ENCODE measurements at regions of chr12 and their contacts with region 1.

Region 1: DNA sequence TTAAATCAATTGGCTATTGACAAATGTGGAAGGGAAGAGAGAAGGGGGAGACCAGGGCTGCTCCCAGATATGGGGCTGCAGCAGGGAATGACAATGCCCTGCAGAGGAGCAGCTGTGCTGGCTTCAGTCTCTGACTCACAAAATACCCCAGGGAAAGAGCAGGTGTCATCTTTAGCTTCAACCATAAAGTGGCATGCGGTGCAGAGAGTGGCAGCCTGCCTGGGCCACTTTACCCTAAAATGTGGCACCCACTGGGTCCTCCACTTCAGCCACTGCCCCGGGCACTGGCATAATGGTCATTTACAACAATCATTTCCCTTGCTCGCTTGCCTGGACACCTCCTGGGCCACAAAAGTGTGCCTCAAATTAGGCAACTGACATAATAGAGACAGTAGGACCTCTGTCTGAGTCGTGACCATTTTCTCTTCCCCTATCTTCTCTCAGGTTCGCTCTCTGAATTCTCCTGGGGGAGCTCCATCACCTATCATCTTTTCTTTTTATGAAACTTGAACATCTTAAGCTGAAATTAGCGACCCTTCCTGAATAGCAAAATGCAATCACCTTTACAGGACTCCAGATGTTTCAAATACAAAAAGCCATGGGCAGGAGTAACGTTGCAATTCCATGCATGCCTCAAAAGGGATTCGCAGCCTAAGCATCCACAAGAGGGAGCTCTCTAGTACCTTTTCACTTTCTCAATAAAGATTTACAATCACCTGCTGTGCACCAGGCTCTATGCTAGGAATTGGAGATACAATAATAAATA is 179.9 kb upstream of the ATF7IP start:
- DNase-seq: peak; percentile 68 to 79
- H3K4me3 ChIP-seq: no peak overlapping the region
- H3K4me3 Mint-ChIP-seq: no peak overlapping the region
- H3K27ac Mint-ChIP-seq: no peak overlapping the region
- H3K4me1 ChIP-seq: peaks cover 4% of the 10 kb centered on the region; the same call in 1 of the 2 replicates
- H3K4me1 Mint-ChIP-seq: peaks cover 7% of the 10 kb centered on the region
- H3K27me3 ChIP-seq: no peaks in the 10 kb centered on the region; the same call in 1 of the 2 replicates
- H3K27me3 Mint-ChIP-seq: no peaks in the 10 kb centered on the region
- CTCF ChIP-seq: peak; percentile 86 to 95

Region 2: GRCh38 chr12:14175206-14175605 is 10.4 kb before region 1 on chr12:
- CTCF ChIA-PET with region 1: no interaction called
- POLR2A ChIA-PET with region 1: no interaction called
- intact Hi-C with region 1: no loop called
- DNase-seq: no peak
- H3K4me3 ChIP-seq: no peak overlapping the region
- H3K4me3 Mint-ChIP-seq: no peak overlapping the region
- H3K27ac Mint-ChIP-seq: no peak overlapping the region
- H3K4me1 ChIP-seq: no peaks in the 10 kb centered on the region
- H3K4me1 Mint-ChIP-seq: no peaks in the 10 kb centered on the region
- H3K27me3 ChIP-seq: no peaks in the 10 kb centered on the region
- H3K27me3 Mint-ChIP-seq: peaks cover 3% of the 10 kb centered on the region
- CTCF ChIP-seq: no peak

Region 3: GRCh38 chr12:14207905-14208551 is 22.4 kb after region 1 on chr12:
- CTCF ChIA-PET with region 1: interaction called, 5 read pairs
- POLR2A ChIA-PET with region 1: no interaction called
- intact Hi-C with region 1: loop called (anchors 1 kb)
- DNase-seq: peak; percentile 92 to 94
- H3K4me3 ChIP-seq: no peak overlapping the region
- H3K4me3 Mint-ChIP-seq: peak overlapping the region; percentile 29
- H3K27ac Mint-ChIP-seq: peak overlapping the region; percentile 96
- H3K4me1 ChIP-seq: peaks cover 57% of the 10 kb centered on the region
- H3K4me1 Mint-ChIP-seq: peaks cover 55% of the 10 kb centered on the region
- H3K27me3 ChIP-seq: no peaks in the 10 kb centered on the region
- H3K27me3 Mint-ChIP-seq: no peaks in the 10 kb centered on the region
- CTCF ChIP-seq: no peak

Region 4: DNA sequence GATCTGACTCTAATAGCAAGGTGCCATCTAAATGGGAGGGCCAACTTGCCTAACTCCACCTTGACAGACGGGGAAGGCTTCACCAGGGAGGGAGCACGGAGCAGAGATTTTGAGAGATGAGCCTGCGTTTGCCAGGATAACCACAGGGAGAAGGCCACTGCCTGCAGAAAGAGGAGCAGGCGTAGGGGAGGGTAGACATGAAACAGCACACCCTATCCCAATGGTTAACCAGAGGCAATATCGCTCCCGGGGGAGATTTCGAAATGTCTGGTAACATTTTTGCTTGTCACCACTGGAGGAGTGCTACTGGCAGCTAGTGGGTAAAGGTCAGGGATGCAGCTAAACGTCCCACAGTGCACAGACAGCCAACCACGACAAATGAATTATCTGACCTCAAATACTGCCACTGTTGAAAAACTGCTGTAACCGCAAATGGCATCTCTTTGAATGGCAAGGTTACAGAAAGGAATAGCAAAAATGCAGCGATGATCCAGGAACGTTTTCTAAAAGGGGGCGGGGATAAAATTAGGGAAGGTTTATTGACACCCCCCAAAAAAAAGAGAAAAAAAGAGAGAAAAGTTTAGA is 53.8 kb after region 1 on chr12:
- CTCF ChIA-PET with region 1: interaction called, 4 read pairs
- POLR2A ChIA-PET with region 1: no interaction called
- intact Hi-C with region 1: loop called (anchors 1 kb)
- DNase-seq: peak; percentile 64 to 85
- H3K4me3 ChIP-seq: no peak overlapping the region
- H3K4me3 Mint-ChIP-seq: peak overlapping the region; percentile 32
- H3K27ac Mint-ChIP-seq: peak overlapping the region; percentile 43
- H3K4me1 ChIP-seq: peaks cover 18% of the 10 kb centered on the region
- H3K4me1 Mint-ChIP-seq: peaks cover 9% of the 10 kb centered on the region
- H3K27me3 ChIP-seq: no peaks in the 10 kb centered on the region
- H3K27me3 Mint-ChIP-seq: no peaks in the 10 kb centered on the region
- CTCF ChIP-seq: peak in 1 of 2 experiments; percentile 16

Region 5: DNA sequence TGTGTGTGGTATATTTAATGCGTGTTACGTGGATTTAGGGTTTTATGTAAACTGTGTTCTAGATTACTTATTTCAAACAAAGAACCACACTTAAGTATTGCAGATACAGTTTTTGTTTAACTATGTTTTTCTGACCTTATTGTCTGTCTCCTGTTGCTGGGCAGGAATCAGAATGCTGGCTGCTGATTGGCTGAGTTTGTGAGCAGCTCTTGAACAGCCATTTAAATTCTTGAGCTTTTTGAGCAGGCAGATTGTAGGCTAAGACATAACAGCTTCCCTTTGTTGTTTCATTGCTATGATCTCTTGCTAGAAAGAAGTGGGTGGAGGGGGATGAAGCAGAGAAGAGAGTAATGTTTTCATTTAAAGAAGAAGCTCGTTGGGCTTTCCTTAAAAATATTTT is 232.1 kb after region 1 on chr12:
- CTCF ChIA-PET with region 1: no interaction called
- POLR2A ChIA-PET with region 1: no interaction called
- intact Hi-C with region 1: loop called (anchors 1 kb)
- DNase-seq: peak; percentile 76 to 85
- H3K4me3 ChIP-seq: no peak overlapping the region
- H3K4me3 Mint-ChIP-seq: peak overlapping the region; percentile 14
- H3K27ac Mint-ChIP-seq: no peak overlapping the region
- H3K4me1 ChIP-seq: peaks cover 15% of the 10 kb centered on the region; the same call in 1 of the 2 replicates
- H3K4me1 Mint-ChIP-seq: peaks cover 13% of the 10 kb centered on the region
- H3K27me3 ChIP-seq: no peaks in the 10 kb centered on the region
- H3K27me3 Mint-ChIP-seq: no peaks in the 10 kb centered on the region
- CTCF ChIP-seq: no peak

Region 6: DNA sequence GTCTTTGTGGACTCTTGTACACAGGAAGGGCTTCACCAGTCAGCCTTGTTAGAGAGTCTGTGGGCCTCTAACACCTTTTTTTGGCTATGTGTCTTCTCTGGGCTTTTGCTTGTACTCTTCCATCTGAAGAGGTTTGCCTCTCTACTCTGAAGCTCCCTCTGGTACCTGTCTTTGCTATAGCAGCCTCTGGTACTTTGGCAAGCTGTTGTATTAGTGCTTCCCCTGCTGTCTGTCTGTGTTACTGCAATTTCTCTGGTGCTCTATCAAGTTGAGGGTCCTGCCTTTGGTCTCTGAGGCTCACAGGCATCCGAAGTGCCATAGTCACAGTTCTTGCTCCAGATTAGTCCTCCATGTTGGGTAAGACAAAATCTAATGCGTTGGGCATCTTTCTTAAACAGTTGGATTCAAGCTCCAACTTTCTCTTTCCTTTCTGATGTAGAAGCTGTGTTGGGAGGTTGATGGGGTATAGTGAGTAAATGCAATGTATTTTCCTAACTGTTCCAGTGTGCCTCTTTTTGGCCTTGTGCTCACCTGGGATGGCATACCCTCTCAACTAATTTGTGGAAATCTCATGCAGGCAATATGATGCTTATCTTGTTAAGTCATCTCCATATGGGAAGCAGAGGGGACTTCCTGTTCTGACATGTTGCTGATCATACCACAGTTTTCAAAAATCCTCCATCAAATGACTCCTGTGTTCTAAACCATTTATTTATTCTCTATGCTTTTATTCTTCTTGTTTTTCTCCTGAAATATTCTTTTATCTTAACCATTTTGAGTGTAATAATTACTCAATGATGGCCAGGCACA is 268.7 kb after region 1 on chr12:
- CTCF ChIA-PET with region 1: interaction called, 8 read pairs
- POLR2A ChIA-PET with region 1: interaction called, 4 read pairs
- intact Hi-C with region 1: loop called (anchors 1 kb)
- DNase-seq: peak; percentile 71 to 75
- H3K4me3 ChIP-seq: no peak overlapping the region
- H3K4me3 Mint-ChIP-seq: no peak overlapping the region
- H3K27ac Mint-ChIP-seq: no peak overlapping the region
- H3K4me1 ChIP-seq: 0 out of 2 replicates have a peak, but pooled peaks cover 11% of the 10 kb centered on the region
- H3K4me1 Mint-ChIP-seq: peaks cover 13% of the 10 kb centered on the region
- H3K27me3 ChIP-seq: no peaks in the 10 kb centered on the region
- H3K27me3 Mint-ChIP-seq: no peaks in the 10 kb centered on the region
- CTCF ChIP-seq: peak; percentile 89 to 96

Region 7: GRCh38 chr12:14567351-14568162 is 381.9 kb after region 1 on chr12 and contains the start of gene PLBD1:
- CTCF ChIA-PET with region 1: no interaction called
- POLR2A ChIA-PET with region 1: no interaction called
- intact Hi-C with region 1: loop called (anchors 5 kb)
- DNase-seq: peak; percentile 73 to 78
- H3K4me3 ChIP-seq: peak within 1 kb of the TSS; percentile 50
- H3K4me3 Mint-ChIP-seq: peak within 1 kb of the TSS; percentile 75
- H3K27ac Mint-ChIP-seq: peak within 1 kb of the TSS; percentile 64
- H3K4me1 ChIP-seq: peaks cover 18% of the 10 kb centered on the region
- H3K4me1 Mint-ChIP-seq: peaks cover 5% of the 10 kb centered on the region
- H3K27me3 ChIP-seq: no peaks in the 10 kb centered on the region
- H3K27me3 Mint-ChIP-seq: no peaks in the 10 kb centered on the region
- CTCF ChIP-seq: no peak
- total RNA-seq, gene PLBD1: 21.1 and 21.4 TPM in 2 replicates

Region 8: DNA sequence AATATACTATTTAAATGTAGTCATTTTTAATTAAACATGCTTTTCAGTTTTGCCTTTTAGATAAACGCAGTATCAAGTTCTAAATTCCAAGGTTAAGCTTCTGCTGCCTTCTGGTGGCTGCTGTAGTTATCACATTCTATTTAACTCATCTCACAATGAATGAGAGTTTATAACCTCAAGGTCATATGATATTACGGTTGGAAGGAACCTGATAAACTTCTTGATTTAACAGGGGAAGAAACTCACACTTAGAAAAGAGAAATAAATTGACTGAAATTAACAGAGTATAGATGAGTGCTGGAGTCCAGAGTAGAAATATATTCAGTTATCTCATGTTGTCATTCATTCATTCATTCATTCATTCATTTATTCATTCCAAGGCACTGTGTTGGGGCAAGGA is 478.9 kb after region 1 on chr12:
- CTCF ChIA-PET with region 1: no interaction called
- POLR2A ChIA-PET with region 1: no interaction called
- intact Hi-C with region 1: loop called (anchors 1 kb)
- DNase-seq: peak in 1 of 2 experiments; percentile 51
- H3K4me3 ChIP-seq: no peak overlapping the region
- H3K4me3 Mint-ChIP-seq: no peak overlapping the region
- H3K27ac Mint-ChIP-seq: no peak overlapping the region
- H3K4me1 ChIP-seq: no peaks in the 10 kb centered on the region
- H3K4me1 Mint-ChIP-seq: peaks cover 10% of the 10 kb centered on the region
- H3K27me3 ChIP-seq: no peaks in the 10 kb centered on the region
- H3K27me3 Mint-ChIP-seq: no peaks in the 10 kb centered on the region
- CTCF ChIP-seq: peak; percentile 64 to 89

Measured in Caco-2 (cell line).